ENCODE measurements at regions of chr2 and their contacts with region 1.

Region 1: GRCh38 chr2:219543601-219544358 is at the starts of genes CHPF and TMEM198:
- DNase-seq: peak; percentile 98 to 100 (median 100)

Region 2: GRCh38 chr2:219388127-219388844 is 155.5 kb before region 1 on chr2:
- intact Hi-C with region 1: loop called (anchors 5 kb)
- DNase-seq: peak; percentile 95 to 100 (median 98)

Region 3: DNA sequence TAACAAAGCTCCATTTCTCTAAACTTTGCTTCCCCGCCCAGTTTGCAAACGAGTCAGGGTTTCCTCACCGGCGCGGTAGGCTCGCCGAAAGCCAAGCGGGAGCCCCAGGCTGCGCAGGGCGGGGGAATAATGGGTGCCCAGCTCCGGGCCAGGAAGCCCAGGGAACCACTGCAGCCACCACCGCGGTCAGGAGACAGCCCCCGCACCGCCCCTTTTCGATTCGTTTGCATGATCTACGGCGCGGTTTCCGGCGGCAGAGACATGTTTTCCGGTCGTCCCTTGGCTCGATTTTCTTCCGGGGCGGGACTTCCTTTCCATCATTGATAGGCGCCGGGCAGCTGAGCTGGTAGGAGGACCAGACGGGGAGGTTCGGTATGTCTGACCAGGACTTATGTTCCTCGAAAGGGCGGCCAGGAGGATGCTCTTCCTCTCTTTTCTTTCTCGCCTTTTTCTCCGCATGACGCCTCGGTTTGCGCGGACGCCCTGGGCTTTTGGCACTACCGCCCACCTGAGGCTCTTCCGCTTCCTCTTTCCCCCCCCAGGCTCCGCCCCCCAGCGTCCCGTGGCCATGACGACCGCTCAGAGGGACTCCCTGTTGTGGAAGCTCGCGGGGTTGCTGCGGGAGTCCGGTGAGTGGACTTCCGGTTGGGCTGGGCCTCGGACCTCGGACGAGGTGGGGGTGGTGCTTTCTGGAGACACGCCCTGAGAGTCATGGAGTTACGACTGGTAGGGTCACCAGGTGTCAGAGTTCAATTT is 54.0 kb after region 1 on chr2 and contains the start of gene STK11IP:
- intact Hi-C with region 1: loop called (anchors 2 kb)
- DNase-seq: peak; percentile 93 to 99 (median 95)

Region 4: GRCh38 chr2:219642465-219643080 is 98.8 kb after region 1 on chr2:
- intact Hi-C with region 1: loop called (anchors 1 kb)
- DNase-seq: peak; percentile 90 to 100 (median 97)

Region 5: DNA sequence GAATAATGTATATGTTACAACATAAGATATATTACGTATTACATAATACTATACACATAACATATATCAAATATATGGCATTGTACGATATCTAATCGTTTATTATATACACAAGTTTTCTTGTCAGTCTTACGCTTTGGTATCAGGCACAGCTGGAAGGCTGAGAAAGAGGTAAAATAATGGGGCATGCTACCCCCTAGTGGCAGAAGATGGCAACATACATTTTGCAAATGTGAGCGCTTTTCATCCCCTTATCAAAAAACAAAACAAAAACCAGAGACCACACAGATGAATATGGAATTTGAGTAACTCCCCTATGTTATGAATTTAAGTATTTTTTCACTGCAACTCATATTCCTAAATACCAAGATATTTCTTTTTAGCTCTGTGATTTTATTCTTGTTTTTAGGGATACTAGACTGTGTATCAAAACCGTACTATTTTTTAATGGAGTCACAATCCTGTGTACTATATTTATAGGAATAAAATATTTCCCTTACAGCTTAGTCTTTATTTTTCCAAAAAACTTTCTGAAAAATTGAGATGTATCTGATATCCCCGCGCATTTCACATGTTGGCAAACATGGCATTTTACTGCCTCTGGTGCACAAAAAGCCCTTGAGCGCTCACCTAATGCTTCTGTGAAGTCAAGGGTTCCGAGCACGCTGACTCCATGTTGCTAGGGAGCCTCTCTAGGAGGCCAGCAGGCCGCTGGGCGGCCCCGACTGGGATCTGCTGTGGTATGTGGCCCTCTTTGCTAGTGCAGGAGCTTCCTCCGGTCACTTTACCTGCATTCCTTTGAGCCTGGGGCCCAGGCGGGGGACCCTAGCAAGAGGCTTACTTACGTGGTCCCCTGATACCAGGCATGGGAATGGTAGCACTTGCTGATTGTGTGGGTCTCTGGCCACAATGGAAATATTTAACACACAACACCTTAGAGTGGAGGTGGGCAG is 146.2 kb after region 1 on chr2:
- intact Hi-C with region 1: loop called (anchors 5 kb)
- DNase-seq: peak in 5 of 10 donors; percentile 23 to 78 (median 35)